WTC11 (cell line): ENCODE measurements at regions of chr19 and their contacts with region 1.

Region 1: DNA sequence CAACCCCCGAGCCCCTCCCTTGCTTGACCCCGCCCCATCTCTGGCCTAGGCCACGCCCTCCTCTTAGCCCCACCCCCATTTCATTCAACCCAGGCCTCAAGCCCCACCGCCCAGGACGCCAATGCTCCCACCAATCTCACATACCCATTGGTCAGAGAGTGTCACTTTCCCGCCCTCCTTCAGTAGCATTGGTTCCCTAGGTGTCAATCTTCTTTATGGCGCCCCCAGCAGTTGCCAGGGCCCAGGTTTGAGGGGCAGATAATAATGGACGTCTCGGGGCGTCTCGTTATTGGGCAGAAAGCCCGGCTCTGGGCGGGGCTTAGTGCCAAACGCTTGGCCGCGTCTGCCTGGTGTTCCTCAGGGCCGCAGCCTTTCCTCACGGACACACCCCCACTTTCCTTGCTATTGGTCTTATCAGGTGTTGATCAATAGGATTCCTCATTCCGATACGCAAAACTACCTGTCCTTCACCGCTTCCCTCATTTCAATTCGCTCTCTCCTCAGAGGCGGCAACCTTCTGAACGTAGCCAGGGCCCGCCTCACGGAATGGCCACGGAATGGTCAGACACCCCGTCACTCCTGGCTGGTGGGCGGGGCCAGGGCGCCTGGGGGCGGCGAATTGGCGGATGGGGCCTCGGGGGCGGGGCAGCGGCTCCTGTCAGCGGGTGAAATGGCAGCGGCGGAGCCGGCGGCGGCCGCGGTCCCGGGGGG is at the start of gene EVI5L:
- DNase-seq: peak; percentile 99
- ATAC-seq: peak; percentile 92
- H3K4me3 Mint-ChIP-seq: peak within 1 kb of the TSS; percentile 91
- H3K27ac Mint-ChIP-seq: no peak within 1 kb of the TSS
- H3K4me1 Mint-ChIP-seq: peaks cover 14% of the 10 kb centered on the region
- H3K27me3 Mint-ChIP-seq: peaks cover 55% of the 10 kb centered on the region
- CTCF ChIP-seq: no peak
- total RNA-seq, gene EVI5L: 10.5 to 13.7 TPM (median 13.6 TPM) in 3 replicates

Region 2: DNA sequence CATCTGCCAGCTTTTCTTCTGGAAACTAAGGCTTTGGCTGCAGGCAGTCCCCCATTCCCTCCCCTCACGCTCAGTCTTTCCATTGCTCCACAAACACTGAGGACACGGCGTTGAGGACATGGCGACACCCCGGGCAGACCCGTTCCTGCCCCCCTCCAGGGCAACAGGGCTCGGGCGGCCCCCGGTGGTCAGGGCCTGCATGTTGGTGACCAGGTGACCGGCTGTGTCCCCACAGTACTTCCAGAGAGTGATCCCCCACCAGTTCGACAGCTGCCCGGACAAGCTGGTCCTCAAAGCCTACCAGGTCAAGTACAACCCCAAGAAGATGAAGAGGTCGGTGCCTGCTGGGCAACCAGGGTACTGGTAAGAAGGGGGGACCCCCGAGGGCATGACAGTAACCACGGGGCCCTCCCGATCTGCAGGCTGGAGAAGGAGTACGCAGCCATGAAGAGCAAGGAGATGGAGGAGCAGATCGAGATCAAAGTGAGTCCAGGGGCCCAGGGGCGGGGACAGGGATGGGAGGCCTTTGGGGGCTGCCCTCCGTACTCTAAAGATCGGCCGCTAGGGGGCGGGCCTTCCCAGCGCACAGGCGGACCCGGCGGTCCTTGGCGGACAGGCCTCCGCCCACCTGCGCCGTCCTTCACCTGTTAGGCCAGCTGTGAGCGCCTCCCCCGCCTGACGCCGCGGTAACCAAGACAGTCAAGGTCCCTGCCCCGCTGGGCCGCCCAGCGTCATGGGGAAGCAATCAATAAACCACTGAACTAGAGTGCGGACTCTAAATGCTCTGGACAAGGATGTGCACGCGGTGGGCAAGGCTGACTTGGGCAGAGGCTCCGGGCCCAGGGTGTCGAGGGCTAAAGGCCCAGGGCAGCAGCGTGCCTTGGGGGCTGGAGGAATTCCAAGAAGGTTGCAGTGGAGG is 23.4 kb after region 1 on chr19:
- CTCF ChIA-PET with region 1: interaction called, 17 read pairs
- POLR2A ChIA-PET with region 1: no interaction called
- DNase-seq: peak; percentile 96
- ATAC-seq: peak; percentile 86
- H3K4me3 Mint-ChIP-seq: peak overlapping the region; percentile 51
- H3K27ac Mint-ChIP-seq: no peak overlapping the region
- H3K4me1 Mint-ChIP-seq: peaks cover 6% of the 10 kb centered on the region; the same call in 1 of the 2 replicates
- H3K27me3 Mint-ChIP-seq: peaks cover 37% of the 10 kb centered on the region
- CTCF ChIP-seq: peak; percentile 95

Region 3: DNA sequence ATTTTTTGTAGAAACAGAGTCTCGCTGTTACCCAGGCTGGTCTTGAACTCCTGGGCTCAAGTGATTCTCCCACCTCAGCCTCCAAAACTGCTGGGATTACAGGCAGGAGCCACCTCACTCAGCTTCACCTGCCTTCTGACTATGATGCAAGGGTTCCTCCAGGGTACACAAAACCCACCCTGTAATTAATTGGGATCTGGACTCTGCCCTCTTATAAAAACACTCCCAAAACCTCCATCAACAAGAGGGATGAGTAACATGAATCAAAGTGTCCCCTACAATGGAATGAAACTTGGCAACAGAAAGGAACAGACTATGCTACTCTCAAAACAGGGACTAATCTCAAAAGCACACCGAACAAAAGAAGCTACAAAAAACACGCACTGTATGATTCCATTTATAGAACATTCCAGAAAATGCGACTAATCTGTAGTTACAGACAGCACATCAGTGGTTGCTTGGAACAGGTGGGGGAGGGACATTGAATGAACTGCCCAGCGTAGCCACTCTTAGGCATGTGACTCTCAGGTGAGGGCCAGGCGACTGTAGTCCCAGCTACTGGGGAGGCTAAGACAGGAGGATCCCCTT is 47.6 kb after region 1 on chr19:
- CTCF ChIA-PET with region 1: no interaction called
- POLR2A ChIA-PET with region 1: no interaction called
- DNase-seq: no peak
- ATAC-seq: no peak
- H3K4me3 Mint-ChIP-seq: no peak overlapping the region
- H3K27ac Mint-ChIP-seq: no peak overlapping the region
- H3K4me1 Mint-ChIP-seq: peaks cover 3% of the 10 kb centered on the region; the same call in 1 of the 2 replicates
- H3K27me3 Mint-ChIP-seq: peaks cover 37% of the 10 kb centered on the region
- CTCF ChIP-seq: no peak

Region 4: GRCh38 chr19:7933411-7933810 is 103.7 kb after region 1 on chr19:
- CTCF ChIA-PET with region 1: no interaction called
- POLR2A ChIA-PET with region 1: no interaction called
- DNase-seq: no peak
- ATAC-seq: 0 out of 2 replicates have a peak, but pooled peaks have one; percentile 19
- H3K4me3 Mint-ChIP-seq: no peak overlapping the region
- H3K27ac Mint-ChIP-seq: no peak overlapping the region
- H3K4me1 Mint-ChIP-seq: no peaks in the 10 kb centered on the region
- H3K27me3 Mint-ChIP-seq: no peaks in the 10 kb centered on the region
- CTCF ChIP-seq: no peak; the same call in 1 of the 2 replicates